Activated CD8-positive, alpha-beta T cell treated with anti-CD3 and anti-CD28 coated beads for 36 hours (primary cell): ENCODE measurements at regions of chr10 and their contacts with region 1.

Region 1: GRCh38 chr10:93512565-93512964 is 16.2 kb downstream of the CEP55 start:
- DNase-seq: no peak
- ATAC-seq: no peak
- H3K4me3 Mint-ChIP-seq: no peak overlapping the region
- H3K27ac Mint-ChIP-seq: no peak overlapping the region
- H3K4me1 Mint-ChIP-seq: peaks cover 4% of the 10 kb centered on the region
- H3K27me3 Mint-ChIP-seq: no peaks in the 10 kb centered on the region
- CTCF ChIP-seq: no peak

Region 2: DNA sequence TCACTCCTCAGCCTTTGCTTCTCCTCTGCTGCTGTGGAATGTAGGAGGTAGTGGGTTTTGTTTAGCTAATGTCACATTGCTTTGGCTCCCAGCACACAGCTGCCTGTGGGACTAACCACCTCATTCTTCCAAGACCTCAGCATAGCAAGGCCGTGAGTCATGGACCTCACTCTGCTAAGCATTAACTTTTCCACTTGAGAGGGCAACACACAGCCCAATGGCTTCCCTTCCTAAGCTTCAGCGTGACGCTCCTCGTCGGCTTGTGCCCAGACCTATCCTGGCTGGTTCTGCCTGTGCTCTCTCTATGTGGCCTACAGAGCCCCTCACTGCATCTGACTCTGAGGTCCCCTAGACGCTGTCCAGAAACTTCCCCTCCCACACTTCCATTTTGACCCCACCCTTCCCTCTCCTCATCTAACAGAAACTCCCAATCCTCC is 53.7 kb before region 1 on chr10:
- CTCF ChIA-PET with region 1: no interaction called
- POLR2A ChIA-PET with region 1: no interaction called
- intact Hi-C with region 1: no loop called
- DNase-seq: no peak
- ATAC-seq: no peak
- H3K4me3 Mint-ChIP-seq: no peak overlapping the region
- H3K27ac Mint-ChIP-seq: no peak overlapping the region
- H3K4me1 Mint-ChIP-seq: peaks cover 8% of the 10 kb centered on the region
- H3K27me3 Mint-ChIP-seq: peaks cover 2% of the 10 kb centered on the region
- CTCF ChIP-seq: no peak

Region 3: GRCh38 chr10:93488956-93489528 is 23.5 kb before region 1 on chr10:
- CTCF ChIA-PET with region 1: interaction called, 64 read pairs
- POLR2A ChIA-PET with region 1: no interaction called
- intact Hi-C with region 1: no loop called
- DNase-seq: no peak
- ATAC-seq: no peak
- H3K4me3 Mint-ChIP-seq: no peak overlapping the region
- H3K27ac Mint-ChIP-seq: no peak overlapping the region
- H3K4me1 Mint-ChIP-seq: no peaks in the 10 kb centered on the region
- H3K27me3 Mint-ChIP-seq: peaks cover 19% of the 10 kb centered on the region
- CTCF ChIP-seq: no peak